MCF 10A (cell line): ENCODE measurements at regions of chr1 and their contacts with region 1.

Region 1: GRCh38 chr1:229363723-229364122 is 20.9 kb upstream of the CCSAP start:
- DNase-seq: no peak
- H3K4me3 Mint-ChIP-seq: no peak overlapping the region
- H3K27ac Mint-ChIP-seq: no peak overlapping the region
- H3K4me1 Mint-ChIP-seq: no peaks in the 10 kb centered on the region
- H3K27me3 Mint-ChIP-seq: peaks cover 38% of the 10 kb centered on the region
- CTCF ChIP-seq: no peak

Region 2: GRCh38 chr1:229388876-229389580 is 25.3 kb after region 1 on chr1:
- CTCF ChIA-PET with region 1: no interaction called
- POLR2A ChIA-PET with region 1: no interaction called
- intact Hi-C with region 1: loop called (anchors 2 kb)
- DNase-seq: peak; percentile 64
- H3K4me3 Mint-ChIP-seq: peak overlapping the region; percentile 10
- H3K27ac Mint-ChIP-seq: peak overlapping the region; percentile 40
- H3K4me1 Mint-ChIP-seq: peaks cover 14% of the 10 kb centered on the region
- H3K27me3 Mint-ChIP-seq: no peaks in the 10 kb centered on the region
- CTCF ChIP-seq: no peak